ENCODE measurements at regions of chr1 and their contacts with region 1.

Region 1: GRCh38 chr1:39901698-39902459 is at the start of gene MYCL:
- DNase-seq: peak; percentile 69 to 95 (median 87)

Region 2: DNA sequence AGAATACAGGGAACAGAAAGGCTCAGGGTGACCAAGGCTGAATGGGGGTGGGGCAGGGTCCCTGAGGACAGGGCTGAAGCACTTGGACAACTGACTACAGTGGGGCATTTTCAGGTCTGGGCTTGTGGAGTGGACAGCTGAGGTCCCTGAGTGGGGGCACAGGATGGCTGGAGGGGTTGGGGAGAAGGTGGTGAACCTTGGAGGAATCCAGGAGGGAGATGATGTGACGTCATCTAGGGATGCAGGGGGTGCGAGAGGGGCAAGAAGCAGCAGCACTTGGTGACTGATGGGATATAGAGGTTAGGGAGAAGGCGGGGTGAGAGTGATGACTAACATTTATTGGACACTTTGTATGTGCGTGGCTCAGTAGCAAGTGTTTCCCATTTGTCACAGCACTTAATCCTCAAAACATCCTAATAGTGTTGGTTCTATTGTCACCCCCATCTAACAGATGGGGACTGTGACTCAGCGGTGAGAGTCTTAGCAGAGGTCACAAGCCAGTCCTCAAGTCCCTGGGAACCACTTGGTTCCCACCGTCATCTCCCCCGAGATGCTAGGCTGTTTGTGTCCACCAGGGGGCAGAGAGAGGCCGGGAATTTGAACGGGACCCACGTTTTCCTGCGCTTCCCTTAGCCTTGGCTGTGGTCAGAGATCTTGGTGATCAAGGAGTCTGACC is 85.3 kb before region 1 on chr1:
- intact Hi-C with region 1: loop called (anchors 5 kb)
- DNase-seq: peak; percentile 22 to 89 (median 74)

Region 3: DNA sequence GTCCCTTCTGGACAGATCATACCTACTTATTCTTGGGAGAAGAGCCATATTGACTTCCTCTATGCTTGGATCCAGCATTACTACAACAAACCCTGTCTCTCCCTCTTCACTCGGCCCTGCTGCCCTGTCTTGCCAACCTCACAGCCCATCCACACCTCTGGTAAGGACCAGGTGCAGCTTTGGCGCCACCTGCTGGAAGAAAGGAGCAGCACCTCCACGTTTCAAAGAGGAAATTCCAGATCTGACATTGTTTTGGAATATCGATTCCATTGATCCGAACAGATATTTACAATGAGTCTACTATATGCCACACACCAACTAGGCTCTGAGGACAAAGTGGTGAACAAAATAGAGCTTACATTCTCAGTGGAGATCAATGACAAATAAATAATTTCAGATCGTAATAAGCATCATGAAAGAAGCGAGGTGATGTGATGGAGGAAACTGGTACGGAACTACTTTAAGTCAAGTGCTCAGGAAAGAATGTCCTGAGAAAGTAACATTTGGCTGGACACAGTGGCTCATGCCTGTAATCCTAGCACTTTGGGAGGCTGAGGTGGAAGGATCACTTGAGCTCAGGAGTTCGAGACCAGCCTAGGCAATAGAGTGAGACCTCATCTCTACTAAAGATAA is 71.7 kb after region 1 on chr1:
- intact Hi-C with region 1: loop called (anchors 5 kb)
- DNase-seq: peak; percentile 60 to 94 (median 83)

Region 4: GRCh38 chr1:40039757-40040510 is 138.1 kb after region 1 on chr1:
- intact Hi-C with region 1: loop called (anchors 10 kb)
- DNase-seq: peak in 41 of 42 donors; percentile 28 to 80 (median 64)

Region 5: GRCh38 chr1:40078512-40079333 is 176.8 kb after region 1 on chr1:
- intact Hi-C with region 1: no loop called
- DNase-seq: peak in 21 of 42 donors; percentile 16 to 75 (median 49)

Measured in head of caudate nucleus (tissue), 42 donors.